CD8-positive, alpha-beta T cell (primary cell): ENCODE measurements at regions of chr6 and their contacts with region 1.

Region 1: GRCh38 chr6:26285143-26286134 is 79.6 kb upstream of the BTN3A2 start:
- DNase-seq: peak; percentile 83 to 99 (median 96)
- ATAC-seq: peak; percentile 82
- H3K4me3 ChIP-seq: peak overlapping the region; percentile 73 to 76
- H3K4me3 Mint-ChIP-seq: peak overlapping the region; percentile 91
- H3K27ac ChIP-seq: peak overlapping the region; percentile 89 to 96
- H3K27ac Mint-ChIP-seq: peak overlapping the region; percentile 97
- H3K4me1 ChIP-seq: peaks cover 14% of the 10 kb centered on the region
- H3K4me1 Mint-ChIP-seq: peaks cover 31% of the 10 kb centered on the region
- H3K27me3 ChIP-seq: no peaks in the 10 kb centered on the region
- H3K27me3 Mint-ChIP-seq: no peaks in the 10 kb centered on the region
- CTCF ChIP-seq: no peak

Region 2: DNA sequence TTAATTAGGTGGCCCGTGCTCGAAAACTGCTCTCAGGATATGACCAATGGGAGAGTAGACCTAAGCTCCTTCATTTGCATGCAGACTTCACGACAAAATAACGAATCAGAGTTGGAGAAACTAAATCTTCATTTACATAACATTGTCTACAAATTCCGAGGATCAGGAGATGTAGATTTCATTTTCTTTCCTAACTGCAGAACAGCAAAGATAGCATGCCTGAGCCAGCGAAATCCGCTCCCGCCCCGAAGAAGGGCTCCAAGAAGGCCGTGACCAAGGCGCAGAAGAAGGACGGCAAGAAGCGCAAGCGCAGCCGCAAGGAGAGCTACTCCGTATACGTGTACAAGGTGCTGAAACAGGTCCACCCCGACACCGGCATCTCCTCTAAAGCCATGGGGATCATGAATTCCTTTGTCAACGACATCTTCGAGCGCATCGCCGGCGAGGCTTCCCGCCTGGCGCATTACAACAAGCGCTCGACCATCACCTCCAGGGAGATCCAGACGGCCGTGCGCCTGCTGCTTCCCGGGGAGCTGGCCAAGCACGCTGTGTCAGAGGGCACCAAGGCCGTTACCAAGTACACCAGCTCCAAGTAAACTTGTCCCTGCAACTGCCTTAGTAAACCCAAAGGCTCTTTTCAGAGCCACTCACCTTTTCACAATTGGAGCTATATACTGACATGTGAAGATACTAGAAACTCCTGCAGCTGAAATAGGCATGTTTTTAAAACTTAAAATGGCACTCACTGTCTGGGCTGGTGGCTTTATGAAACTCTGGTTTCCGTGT is 101.7 kb before region 1 on chr6:
- CTCF ChIA-PET with region 1: interaction called, 3 read pairs
- POLR2A ChIA-PET with region 1: interaction called, 25 read pairs
- intact Hi-C with region 1: no loop called
- DNase-seq: peak in 7 of 9 experiments; percentile 33 to 90 (median 59)
- ATAC-seq: peak; percentile 88
- H3K4me3 ChIP-seq: peak overlapping the region; percentile 60 to 71
- H3K4me3 Mint-ChIP-seq: peak overlapping the region; percentile 100
- H3K27ac ChIP-seq: peak overlapping the region; percentile 61 to 76
- H3K27ac Mint-ChIP-seq: peak overlapping the region; percentile 99
- H3K4me1 ChIP-seq: peaks cover 20% of the 10 kb centered on the region
- H3K4me1 Mint-ChIP-seq: peaks cover 42% of the 10 kb centered on the region
- H3K27me3 ChIP-seq: no peaks in the 10 kb centered on the region
- H3K27me3 Mint-ChIP-seq: no peaks in the 10 kb centered on the region
- CTCF ChIP-seq: no peak

Region 3: DNA sequence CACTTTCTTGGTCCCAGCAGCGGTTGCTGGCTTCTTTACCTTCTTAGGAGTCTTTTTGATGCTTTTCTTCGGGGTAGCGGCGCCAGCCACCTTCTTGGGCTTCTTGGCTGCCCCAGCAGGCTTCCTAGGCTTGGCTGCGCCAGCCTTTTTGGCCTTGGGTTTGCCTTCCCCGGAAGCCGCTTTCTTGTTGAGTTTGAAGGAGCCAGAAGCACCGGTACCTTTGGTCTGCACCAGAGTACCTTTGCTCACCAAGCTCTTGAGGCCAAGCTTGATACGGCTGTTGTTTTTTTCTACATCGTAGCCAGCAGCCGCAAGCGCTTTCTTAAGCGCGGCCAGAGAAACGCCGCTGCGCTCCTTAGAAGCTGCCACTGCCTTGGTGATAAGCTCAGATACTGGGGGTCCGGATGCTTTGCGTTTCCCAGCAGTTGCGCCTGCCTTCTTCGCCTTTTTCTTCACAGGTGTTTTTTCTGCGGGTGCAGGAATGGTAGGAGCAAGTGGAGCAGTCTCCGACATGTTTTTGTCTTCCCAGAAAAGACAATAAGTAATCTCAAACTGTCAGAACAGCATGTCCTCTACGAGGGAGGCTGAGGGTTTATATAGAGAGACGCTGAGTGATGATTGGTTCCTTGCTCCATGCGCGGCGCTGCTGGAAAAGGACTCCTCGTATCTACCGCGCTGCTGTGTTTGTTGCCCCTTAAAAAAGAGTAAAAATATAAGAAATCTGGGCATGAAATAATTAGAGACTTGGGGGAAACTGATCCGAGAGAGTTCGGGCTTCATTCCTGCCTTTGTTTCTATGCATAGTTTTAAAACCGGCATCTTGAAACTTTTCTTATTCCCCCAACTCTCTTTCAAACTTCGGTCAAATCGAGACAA is 50.8 kb before region 1 on chr6:
- CTCF ChIA-PET with region 1: interaction called, 3 read pairs
- POLR2A ChIA-PET with region 1: interaction called, 99 read pairs
- intact Hi-C with region 1: no loop called
- DNase-seq: peak; percentile 55 to 88 (median 66)
- ATAC-seq: peak; percentile 63
- H3K4me3 ChIP-seq: peak overlapping the region; percentile 66 to 76
- H3K4me3 Mint-ChIP-seq: peak overlapping the region; percentile 85
- H3K27ac ChIP-seq: peak overlapping the region; percentile 84 to 92
- H3K27ac Mint-ChIP-seq: peak overlapping the region; percentile 93
- H3K4me1 ChIP-seq: peaks cover 14% of the 10 kb centered on the region
- H3K4me1 Mint-ChIP-seq: peaks cover 31% of the 10 kb centered on the region
- H3K27me3 ChIP-seq: no peaks in the 10 kb centered on the region
- H3K27me3 Mint-ChIP-seq: no peaks in the 10 kb centered on the region
- CTCF ChIP-seq: no peak

Region 4: DNA sequence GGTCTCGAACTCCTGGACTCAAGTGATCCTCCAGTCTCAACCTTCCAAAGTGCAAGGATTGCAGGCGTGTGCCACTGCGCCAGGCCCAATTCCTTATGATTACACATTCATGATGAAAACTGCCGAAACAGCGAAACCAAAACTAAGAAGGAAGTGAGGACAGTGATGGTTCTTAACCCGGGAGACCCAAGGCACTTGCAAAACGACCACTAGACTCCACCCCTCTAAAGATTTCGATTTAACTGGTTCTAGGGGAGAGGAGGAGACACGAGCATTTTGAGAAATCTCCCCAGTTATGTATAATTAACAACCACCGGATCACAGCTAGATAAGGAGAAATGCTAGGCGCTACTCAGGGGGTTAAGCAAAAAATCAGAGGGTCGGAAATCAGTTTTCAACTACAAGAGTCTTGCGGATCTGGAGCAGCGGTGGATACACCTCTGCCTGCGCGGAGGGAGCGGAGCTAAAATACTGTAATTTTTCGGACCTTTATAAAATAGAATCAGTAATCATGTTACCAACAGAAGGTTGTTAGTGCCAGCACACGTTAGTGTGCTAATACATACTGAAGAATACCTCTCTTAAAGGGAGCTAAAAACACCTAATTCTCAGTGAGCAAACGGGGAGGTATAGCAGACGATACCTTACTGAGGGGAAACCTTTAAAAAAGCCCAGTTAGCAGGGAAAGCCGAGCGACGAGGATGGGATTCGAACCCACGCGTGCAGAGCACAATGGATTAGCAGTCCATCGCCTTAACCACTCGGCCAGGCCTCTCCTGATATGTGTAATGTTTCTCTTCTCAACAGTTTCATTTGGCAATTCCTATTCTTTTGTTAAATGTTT is 19.6 kb after region 1 on chr6:
- CTCF ChIA-PET with region 1: no interaction called
- POLR2A ChIA-PET with region 1: interaction called, 14 read pairs
- intact Hi-C with region 1: loop called (anchors 1 to 2 kb)
- DNase-seq: peak; percentile 46 to 87 (median 60)
- ATAC-seq: peak; percentile 83
- H3K4me3 ChIP-seq: peak overlapping the region; percentile 55 to 61
- H3K4me3 Mint-ChIP-seq: peak overlapping the region; percentile 92
- H3K27ac ChIP-seq: peak overlapping the region; percentile 47 to 68
- H3K27ac Mint-ChIP-seq: peak overlapping the region; percentile 92
- H3K4me1 ChIP-seq: peaks cover 10% of the 10 kb centered on the region
- H3K4me1 Mint-ChIP-seq: peaks cover 36% of the 10 kb centered on the region
- H3K27me3 ChIP-seq: no peaks in the 10 kb centered on the region
- H3K27me3 Mint-ChIP-seq: no peaks in the 10 kb centered on the region
- CTCF ChIP-seq: no peak

Region 5: DNA sequence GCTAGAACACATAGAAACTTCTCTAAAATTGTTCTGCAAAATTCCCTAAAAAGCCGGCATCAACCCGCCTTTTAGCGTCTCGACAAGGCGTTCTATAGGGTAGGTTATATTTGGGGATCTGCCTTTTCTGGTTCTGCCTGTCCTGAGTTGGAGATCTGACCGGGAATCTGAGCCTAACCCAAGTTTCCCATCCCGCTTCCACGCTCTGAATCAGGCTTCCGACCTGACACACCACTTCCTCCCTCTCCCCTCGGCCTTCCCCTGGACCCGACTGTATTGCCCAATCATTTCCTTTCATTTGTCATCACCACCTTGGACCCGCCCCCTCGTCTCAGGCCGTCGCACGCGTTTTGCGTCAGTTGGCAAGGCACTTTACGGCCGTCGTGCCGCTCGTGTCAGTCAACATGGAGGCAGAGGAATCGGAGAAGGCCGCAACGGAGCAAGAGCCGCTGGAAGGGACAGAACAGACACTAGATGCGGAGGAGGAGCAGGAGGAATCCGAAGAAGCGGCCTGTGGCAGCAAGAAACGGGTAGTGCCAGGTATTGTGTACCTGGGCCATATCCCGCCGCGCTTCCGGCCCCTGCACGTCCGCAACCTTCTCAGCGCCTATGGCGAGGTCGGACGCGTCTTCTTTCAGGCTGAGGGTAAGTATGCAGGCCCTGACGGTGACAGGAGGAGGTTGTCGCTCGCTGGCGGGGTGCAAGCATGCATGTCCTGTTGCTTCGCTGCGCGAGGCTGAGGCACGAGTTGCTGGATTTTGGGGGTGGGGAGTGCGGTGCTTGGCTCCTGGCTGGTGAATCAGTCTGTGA is 311.3 kb after region 1 on chr6 and contains the start of gene ABT1:
- CTCF ChIA-PET with region 1: no interaction called
- POLR2A ChIA-PET with region 1: no interaction called
- intact Hi-C with region 1: loop called in 1 of 2 experiments (anchors 1 kb)
- DNase-seq: peak; percentile 94 to 99 (median 97)
- ATAC-seq: peak; percentile 85
- H3K4me3 ChIP-seq: peak within 1 kb of the TSS; percentile 93 to 94
- H3K4me3 Mint-ChIP-seq: no peak within 1 kb of the TSS
- H3K27ac ChIP-seq: peak within 1 kb of the TSS; percentile 90 to 94
- H3K27ac Mint-ChIP-seq: no peak within 1 kb of the TSS
- H3K4me1 ChIP-seq: peaks cover 18% of the 10 kb centered on the region
- H3K4me1 Mint-ChIP-seq: peaks cover 23% of the 10 kb centered on the region
- H3K27me3 ChIP-seq: peaks cover 0 to 4% of the 10 kb centered on the region in 2 experiments
- H3K27me3 Mint-ChIP-seq: peaks cover 10% of the 10 kb centered on the region
- CTCF ChIP-seq: no peak
- total RNA-seq, gene ABT1: 42.5 to 44.2 TPM